ENCODE measurements at regions of chr15 and their contacts with region 1.

Region 1: GRCh38 chr15:63157118-63157843 is at the start of gene RPS27L:
- DNase-seq: peak; percentile 96 to 98
- ATAC-seq: peak; percentile 98
- H3K4me3 ChIP-seq: peak within 1 kb of the TSS; percentile 74
- H3K27ac ChIP-seq: peak within 1 kb of the TSS; percentile 95 to 98
- H3K4me1 ChIP-seq: peaks cover 32% of the 10 kb centered on the region
- CTCF ChIP-seq: no peak
- EP300 ChIP-seq: no peak
- POLR2A ChIP-seq: peak; percentile 93
- RAD21 ChIP-seq: no peak; a peak in 2 of 5 replicates
- polyA plus RNA-seq, gene RPS27L: 742 and 748 TPM in 2 replicates

Region 2: GRCh38 chr15:63019539-63020109 is 137.7 kb before region 1 on chr15:
- CTCF ChIA-PET with region 1: no interaction called
- POLR2A ChIA-PET with region 1: no interaction called
- DNase-seq: peak; percentile 76 to 85
- ATAC-seq: peak; percentile 78 to 82
- H3K4me3 ChIP-seq: no peak overlapping the region
- H3K27ac ChIP-seq: peak overlapping the region; percentile 59 to 85
- H3K4me1 ChIP-seq: peaks cover 66% of the 10 kb centered on the region
- CTCF ChIP-seq: no peak
- EP300 ChIP-seq: peak in 1 of 2 experiments; percentile 23; a peak in 1 of 5 replicates
- POLR2A ChIP-seq: no peak
- RAD21 ChIP-seq: peak in 1 of 2 experiments; percentile 30; a peak in 1 of 5 replicates

Region 3: GRCh38 chr15:63135804-63136203 is 21.5 kb before region 1 on chr15:
- CTCF ChIA-PET with region 1: no interaction called
- POLR2A ChIA-PET with region 1: interaction called, 18 read pairs
- DNase-seq: peak in 1 of 2 experiments; percentile 36
- ATAC-seq: peak; percentile 65 to 77; a peak in 5 of 6 replicates
- H3K4me3 ChIP-seq: no peak overlapping the region
- H3K27ac ChIP-seq: peak overlapping the region; percentile 37 to 71; a peak in 5 of 6 replicates
- H3K4me1 ChIP-seq: peaks cover 40% of the 10 kb centered on the region
- CTCF ChIP-seq: no peak
- EP300 ChIP-seq: no peak
- POLR2A ChIP-seq: no peak
- RAD21 ChIP-seq: no peak

Region 4: DNA sequence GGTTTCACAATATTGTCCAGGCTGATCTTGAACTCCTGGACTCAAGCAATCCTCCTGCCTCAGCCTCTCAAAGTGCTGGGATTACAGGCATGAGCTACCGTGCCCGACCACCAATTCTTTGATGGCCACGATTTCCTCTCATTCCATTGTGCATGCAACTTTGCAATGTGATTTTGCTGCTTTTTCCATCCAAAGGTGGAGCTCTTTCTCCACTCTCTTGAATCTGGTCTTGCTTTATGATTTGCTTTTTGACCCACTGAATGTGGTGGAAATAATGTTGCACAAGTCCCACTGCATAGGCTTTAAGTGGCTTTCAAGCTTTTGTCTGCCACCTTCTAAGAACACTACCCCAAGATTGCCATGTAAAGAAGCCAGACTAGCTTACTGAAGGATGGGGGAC is 10.6 kb before region 1 on chr15:
- CTCF ChIA-PET with region 1: no interaction called
- POLR2A ChIA-PET with region 1: interaction called, 20 read pairs
- DNase-seq: peak in 1 of 2 experiments; percentile 41
- ATAC-seq: peak; percentile 51; a peak in 5 of 6 replicates
- H3K4me3 ChIP-seq: no peak overlapping the region
- H3K27ac ChIP-seq: peak overlapping the region in 1 of 2 experiments; percentile 40; a peak in 3 of 6 replicates
- H3K4me1 ChIP-seq: peaks cover 16% of the 10 kb centered on the region
- CTCF ChIP-seq: peak; percentile 34; the same call in 2 of the 3 replicates
- EP300 ChIP-seq: no peak
- POLR2A ChIP-seq: no peak
- RAD21 ChIP-seq: peak; percentile 48 to 50

Region 5: DNA sequence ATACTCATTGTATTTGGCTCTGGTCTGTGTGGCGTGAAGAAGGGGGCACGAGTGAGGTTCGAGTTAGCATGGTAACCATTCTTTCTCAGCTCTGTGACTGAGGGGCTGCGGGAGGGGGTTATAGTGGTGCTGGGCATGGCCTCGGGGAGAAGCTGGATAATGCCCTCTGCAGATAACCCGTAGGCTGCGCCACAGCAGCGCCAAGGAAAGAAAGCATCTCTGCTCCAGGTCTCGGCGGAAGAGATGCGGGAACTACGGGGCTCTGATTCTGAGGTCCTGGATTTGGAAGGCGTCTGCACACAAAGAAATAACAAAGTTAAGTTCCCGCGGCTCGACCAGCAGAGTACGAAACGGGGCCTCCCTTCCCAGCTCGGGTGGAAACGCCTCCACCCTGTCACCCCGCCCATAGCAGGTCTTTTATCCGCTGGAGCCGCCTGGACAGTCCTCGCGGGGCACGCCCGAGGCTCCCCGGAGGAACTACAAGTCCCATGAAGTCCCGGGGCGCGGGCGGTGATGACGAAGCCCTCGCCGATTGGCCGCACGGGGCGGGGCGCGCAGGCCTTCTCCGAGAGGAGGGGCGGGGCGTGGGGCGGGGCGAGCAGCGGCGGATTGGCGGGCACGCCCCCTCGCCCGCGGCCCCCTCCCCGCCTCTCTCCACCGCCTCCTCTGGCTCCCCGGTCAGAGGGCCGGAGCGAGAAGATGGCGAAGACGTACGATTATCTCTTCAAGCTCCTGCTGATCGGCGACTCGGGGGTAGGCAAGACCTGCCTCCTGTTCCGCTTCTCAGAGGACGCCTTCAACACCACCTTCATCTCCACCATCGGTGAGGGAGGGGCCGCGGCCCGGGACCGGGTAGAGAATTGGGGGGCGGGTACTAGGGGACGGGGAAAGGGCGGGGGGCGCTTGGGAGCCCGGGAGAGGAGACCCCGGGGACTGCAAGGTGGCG is 31.9 kb after region 1 on chr15 and contains the start of gene RAB8B:
- CTCF ChIA-PET with region 1: interaction called, 3 read pairs
- POLR2A ChIA-PET with region 1: interaction called, 13 read pairs
- DNase-seq: peak; percentile 87 to 96
- ATAC-seq: peak; percentile 92 to 98
- H3K4me3 ChIP-seq: peak within 1 kb of the TSS; percentile 68
- H3K27ac ChIP-seq: peak within 1 kb of the TSS; percentile 75 to 93
- H3K4me1 ChIP-seq: peaks cover 42% of the 10 kb centered on the region
- CTCF ChIP-seq: no peak
- EP300 ChIP-seq: no peak
- POLR2A ChIP-seq: peak; percentile 71
- RAD21 ChIP-seq: peak in 1 of 2 experiments; percentile 16; a peak in 1 of 5 replicates
- polyA plus RNA-seq, gene RAB8B: 28.8 and 41.4 TPM in 2 replicates

Region 6: DNA sequence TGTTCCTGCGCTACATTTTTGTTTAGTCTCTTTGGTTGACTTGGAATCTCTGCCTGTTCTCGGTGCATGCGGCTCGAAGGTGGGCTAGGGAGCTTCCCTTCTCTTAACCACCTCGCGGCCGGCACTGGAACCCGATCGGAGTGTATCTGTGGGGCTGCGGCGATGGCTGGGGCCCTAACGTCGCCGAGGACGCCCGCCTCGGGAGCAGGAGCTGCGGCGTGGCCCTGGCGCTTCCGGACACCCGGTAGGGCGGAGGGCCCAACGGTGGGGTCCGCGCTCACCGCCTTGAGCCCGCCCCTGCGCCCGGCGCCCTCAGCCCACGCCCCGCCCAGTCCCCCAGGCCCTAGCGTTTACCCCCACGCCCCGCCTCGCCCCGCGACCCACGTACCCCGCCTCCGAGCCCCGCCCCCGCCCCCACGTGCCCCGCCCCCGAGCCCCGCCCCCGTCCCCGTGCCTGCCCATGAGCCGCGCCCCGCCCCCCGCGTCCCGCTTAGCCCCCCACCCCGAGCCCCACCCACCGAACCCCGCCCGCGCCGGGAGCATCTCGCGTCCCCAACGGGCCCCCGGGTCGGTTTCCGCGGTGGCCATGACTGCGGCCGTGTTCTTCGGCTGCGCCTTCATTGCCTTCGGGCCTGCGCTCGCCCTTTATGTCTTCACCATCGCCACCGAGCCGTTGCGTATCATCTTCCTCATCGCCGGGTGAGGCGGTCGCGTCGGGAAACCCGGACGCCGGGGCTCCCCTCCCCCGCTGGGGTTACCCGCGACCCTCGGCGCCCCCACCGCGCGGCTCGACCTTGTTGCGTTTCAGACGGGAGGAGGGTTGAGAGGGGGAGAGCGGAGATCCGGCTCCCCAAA is 120.0 kb after region 1 on chr15 and contains the start of gene APH1B:
- CTCF ChIA-PET with region 1: interaction called, 6 read pairs
- POLR2A ChIA-PET with region 1: interaction called, 24 read pairs
- DNase-seq: peak; percentile 69 to 83
- ATAC-seq: peak; percentile 94
- H3K4me3 ChIP-seq: peak within 1 kb of the TSS; percentile 92
- H3K27ac ChIP-seq: peak within 1 kb of the TSS; percentile 88 to 94
- H3K4me1 ChIP-seq: peaks cover 24% of the 10 kb centered on the region
- CTCF ChIP-seq: no peak
- EP300 ChIP-seq: peak in 1 of 2 experiments; percentile 22; a peak in 1 of 5 replicates
- POLR2A ChIP-seq: peak; percentile 95
- RAD21 ChIP-seq: peak; percentile 12 to 38; a peak in 3 of 5 replicates
- polyA plus RNA-seq, gene APH1B: 25.3 and 28.5 TPM in 2 replicates

Measured in A549 (cell line).